ENCODE measurements at regions of chr16 and their contacts with region 1.

Region 1: DNA sequence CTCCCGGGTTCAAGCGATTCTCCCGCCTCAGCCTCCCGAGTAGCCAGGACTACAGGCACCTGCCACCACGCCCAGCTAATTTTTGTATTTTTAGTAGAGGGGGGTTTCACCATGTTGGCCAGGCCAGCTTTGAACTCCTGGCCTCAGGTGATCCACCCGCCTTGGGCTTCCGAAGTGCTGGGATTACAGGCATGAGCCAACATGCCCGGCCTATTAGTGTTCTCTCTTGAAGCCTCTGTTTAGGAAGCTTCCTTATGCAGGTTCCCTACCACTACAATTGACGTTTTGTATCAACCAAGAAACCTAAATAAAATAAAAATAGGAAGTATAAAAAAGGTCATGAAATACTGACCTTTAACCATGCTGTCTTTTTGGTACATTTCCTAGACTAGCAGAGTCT is 16.0 kb downstream of the CHST5 start:
- DNase-seq: no peak
- H3K4me3 Mint-ChIP-seq: no peak overlapping the region
- H3K27ac Mint-ChIP-seq: no peak overlapping the region
- H3K4me1 Mint-ChIP-seq: peaks cover 13% of the 10 kb centered on the region
- H3K27me3 Mint-ChIP-seq: peaks cover 1% of the 10 kb centered on the region

Region 2: DNA sequence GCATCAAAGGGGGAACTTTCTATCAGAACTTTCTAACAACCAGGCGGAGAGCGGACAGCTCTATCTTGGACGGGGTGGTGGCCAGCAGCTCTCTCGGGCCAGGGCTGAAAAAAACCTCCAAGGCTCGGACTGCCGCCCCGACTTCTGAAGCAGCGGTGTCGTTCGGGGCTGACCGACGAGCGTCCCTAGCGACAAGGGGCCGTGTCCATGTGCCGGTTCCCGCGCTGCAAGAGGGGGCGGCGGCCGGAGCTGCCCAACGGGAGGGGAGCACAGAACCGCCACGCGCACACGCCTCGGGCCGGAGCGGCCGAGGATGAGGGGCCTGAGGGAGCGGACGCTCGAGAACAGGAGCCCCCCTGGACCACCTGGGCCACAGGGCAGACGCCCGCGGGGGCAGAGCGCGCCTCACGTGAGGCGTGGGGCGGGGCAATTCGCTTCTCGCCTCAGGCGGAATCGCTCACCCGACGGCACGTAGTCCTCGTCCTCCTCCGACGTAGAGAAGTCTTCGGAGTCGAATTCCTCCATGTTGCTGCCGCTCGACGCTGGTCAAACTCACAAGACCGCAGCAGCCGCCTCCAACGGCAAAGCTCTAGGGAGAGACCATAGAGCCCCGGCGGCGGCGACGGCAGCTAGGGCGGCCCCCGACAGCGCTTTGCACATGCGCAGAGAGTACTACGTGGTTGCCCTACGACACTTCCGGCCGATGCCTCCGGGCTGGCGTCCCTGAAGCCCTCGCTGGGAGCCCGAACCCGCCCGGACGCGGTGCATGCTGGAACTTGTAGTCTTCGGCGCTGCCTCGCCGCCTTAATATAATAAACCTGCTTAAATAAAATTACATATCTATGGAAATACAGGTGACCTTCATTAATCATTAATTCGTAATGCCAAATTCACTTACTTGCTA is 86.8 kb before region 1 on chr16 and contains the start of gene CFDP1:
- CTCF ChIA-PET with region 1: interaction called, 16 read pairs
- POLR2A ChIA-PET with region 1: no interaction called
- DNase-seq: peak; percentile 95
- H3K4me3 Mint-ChIP-seq: peak within 1 kb of the TSS; percentile 81
- H3K27ac Mint-ChIP-seq: peak within 1 kb of the TSS; percentile 93
- H3K4me1 Mint-ChIP-seq: peaks cover 33% of the 10 kb centered on the region
- H3K27me3 Mint-ChIP-seq: no peaks in the 10 kb centered on the region
- total RNA-seq, gene CFDP1: 35.1 to 36.2 TPM

Region 3: DNA sequence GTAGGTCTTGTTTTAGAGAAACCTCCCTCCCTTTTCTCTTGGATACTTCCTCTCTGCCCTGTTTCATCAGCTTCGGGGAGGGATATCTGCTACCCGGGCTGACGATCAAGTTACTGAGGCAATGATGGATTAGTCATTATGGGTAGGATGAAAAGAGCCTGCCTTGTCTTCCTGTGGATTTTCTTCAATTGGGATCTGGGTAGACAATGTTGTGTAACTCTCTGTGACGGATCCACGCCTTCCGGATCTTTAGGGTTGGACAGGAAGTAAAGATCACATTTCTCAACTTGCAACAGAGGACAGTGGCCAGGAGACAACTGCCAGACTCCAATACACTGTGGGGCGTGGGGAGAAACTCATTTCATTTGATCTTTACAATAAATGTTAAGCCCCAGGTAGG is 13.3 kb before region 1 on chr16:
- CTCF ChIA-PET with region 1: interaction called, 14 read pairs
- POLR2A ChIA-PET with region 1: interaction called, 3 read pairs
- DNase-seq: no peak
- H3K4me3 Mint-ChIP-seq: no peak overlapping the region
- H3K27ac Mint-ChIP-seq: no peak overlapping the region
- H3K4me1 Mint-ChIP-seq: no peaks in the 10 kb centered on the region
- H3K27me3 Mint-ChIP-seq: peaks cover 23% of the 10 kb centered on the region

Region 4: GRCh38 chr16:75555707-75556430 is 36.0 kb after region 1 on chr16 and contains the start of gene TMEM231:
- CTCF ChIA-PET with region 1: interaction called, 16 read pairs
- POLR2A ChIA-PET with region 1: interaction called, 3 read pairs
- DNase-seq: peak; percentile 98
- H3K4me3 Mint-ChIP-seq: peak within 1 kb of the TSS; percentile 86
- H3K27ac Mint-ChIP-seq: peak within 1 kb of the TSS; percentile 71
- H3K4me1 Mint-ChIP-seq: peaks cover 23% of the 10 kb centered on the region
- H3K27me3 Mint-ChIP-seq: peaks cover 5% of the 10 kb centered on the region
- total RNA-seq, gene TMEM231: 1.9 to 2.0 TPM

Region 5: GRCh38 chr16:75622761-75623605 is 103.1 kb after region 1 on chr16 and contains the start of gene ADAT1:
- CTCF ChIA-PET with region 1: interaction called, 17 read pairs
- POLR2A ChIA-PET with region 1: interaction called, 12 read pairs
- DNase-seq: peak; percentile 99
- H3K4me3 Mint-ChIP-seq: peak within 1 kb of the TSS; percentile 92
- H3K27ac Mint-ChIP-seq: peak within 1 kb of the TSS; percentile 94
- H3K4me1 Mint-ChIP-seq: peaks cover 69% of the 10 kb centered on the region
- H3K27me3 Mint-ChIP-seq: no peaks in the 10 kb centered on the region
- total RNA-seq, gene ADAT1: 50.7 to 56.0 TPM

Measured in activated CD4-positive, alpha-beta memory T cell treated with anti-CD3 and anti-CD28 coated beads, Interleukin-2, amount 10 ng/mL, durations not matched to agents 7 days and 5 days (primary cell).